Vagina (tissue), 2 donors: ENCODE measurements at regions of chr5 and their contacts with region 1.

Region 1: DNA sequence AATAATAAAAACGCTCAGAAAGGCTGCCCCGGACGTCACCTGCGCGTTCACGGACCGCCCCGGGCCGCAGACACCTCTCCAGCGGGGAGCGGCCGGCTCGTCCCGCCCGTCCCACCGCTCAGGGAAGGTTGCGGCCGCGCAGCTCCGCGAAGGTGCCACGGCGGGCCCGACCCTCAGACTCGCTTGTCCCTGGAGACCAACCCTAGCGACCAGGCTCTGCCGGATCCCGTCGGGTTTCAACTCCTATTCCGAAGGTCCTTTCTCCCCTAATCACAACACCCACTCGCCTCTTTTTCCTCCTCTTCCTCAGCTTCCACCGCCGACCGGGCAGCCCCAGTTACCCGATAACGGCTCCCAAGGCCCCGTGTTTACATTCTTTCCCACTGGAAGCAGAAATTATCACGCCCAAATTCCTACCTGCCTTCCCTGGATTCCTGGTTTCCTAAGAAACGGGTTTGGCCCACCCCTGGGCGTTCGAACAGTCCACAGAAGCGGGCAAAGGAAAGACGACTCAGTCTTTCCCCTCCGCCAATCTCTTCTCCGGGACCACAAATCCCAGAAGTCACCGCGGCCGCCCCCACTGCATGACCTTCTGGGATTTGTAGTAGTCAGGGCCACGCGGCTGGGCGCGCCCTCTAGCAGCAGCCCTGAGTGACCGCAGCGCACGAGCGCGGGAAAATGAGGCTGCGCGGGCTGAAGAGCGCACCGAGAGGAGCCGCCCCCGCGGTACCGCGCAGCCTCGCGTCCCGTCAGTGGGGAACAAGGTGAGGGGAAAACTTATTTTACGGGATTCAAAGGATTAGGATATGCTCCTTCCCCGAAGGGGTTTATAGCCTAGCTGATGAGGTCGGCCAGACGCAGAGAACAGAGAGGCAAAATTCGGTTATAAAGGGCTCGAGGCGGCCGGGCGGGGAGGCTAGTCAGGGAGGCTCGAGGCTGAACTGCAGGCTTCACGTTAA is at the start of gene TTC33:
- DNase-seq: peak in 1 of 2 donors; percentile 94
- H3K4me3 ChIP-seq: peak within 1 kb of the TSS; percentile 93 to 95
- H3K27ac ChIP-seq: peak within 1 kb of the TSS; percentile 92
- H3K4me1 ChIP-seq: peaks cover 22% of the 10 kb centered on the region
- H3K27me3 ChIP-seq: no peaks in the 10 kb centered on the region
- CTCF ChIP-seq: peak; percentile 57 to 76 (median 72)
- POLR2A ChIP-seq: peak in 1 of 2 donors; percentile 69
- total RNA-seq, gene TTC33: 12.8 TPM

Region 2: GRCh38 chr5:40356248-40356647 is 399.4 kb before region 1 on chr5:
- intact Hi-C with region 1: no loop called
- DNase-seq: no peak
- H3K4me3 ChIP-seq: no peak overlapping the region
- H3K27ac ChIP-seq: no peak overlapping the region
- H3K4me1 ChIP-seq: no peaks in the 10 kb centered on the region
- H3K27me3 ChIP-seq: no peaks in the 10 kb centered on the region
- CTCF ChIP-seq: no peak
- POLR2A ChIP-seq: no peak

Region 3: DNA sequence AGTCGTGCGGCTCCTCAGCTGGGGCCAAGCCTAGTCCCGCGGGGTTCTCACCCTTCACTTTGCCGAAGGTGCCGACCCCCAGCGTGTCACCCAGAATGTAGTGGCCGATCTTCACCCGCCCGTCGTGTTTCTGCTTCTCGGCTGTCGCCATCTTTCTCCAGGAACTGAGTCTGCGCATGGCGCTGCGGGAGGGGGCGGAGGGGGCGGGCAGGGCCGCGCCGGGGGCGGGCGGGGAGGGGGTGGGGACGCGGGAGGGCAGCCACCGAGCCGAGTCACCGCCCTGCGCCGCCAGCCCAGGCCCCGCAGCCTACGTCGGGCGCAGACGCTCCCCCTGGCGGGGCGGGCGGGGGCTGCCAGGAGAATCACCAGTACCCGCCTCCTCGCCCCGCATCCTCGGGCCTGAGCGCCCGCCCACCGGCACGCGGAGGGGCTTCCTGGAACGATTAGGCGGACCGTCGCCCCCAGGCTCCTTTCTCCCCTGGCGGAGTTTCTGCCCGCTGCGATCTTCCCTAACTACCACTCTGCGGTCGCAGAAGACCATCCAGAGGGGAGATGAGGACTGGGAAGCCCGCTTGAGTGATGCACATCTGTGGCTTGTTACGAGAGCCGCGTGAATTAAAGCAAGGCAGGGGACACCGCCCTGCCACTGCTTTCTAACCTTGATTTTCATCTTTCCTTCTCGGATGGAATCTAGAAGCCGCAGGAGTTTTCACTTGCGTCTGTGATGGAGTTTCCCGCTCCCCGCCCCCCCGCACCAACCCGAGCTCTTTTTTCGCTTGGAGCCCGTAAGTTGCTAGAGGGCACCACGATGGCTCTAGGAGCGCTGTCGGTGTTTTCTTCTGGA is 42.5 kb after region 1 on chr5 and contains the start of gene PRKAA1:
- intact Hi-C with region 1: loop called (anchors 2 kb)
- DNase-seq: peak in 1 of 2 donors; percentile 93
- H3K4me3 ChIP-seq: peak within 1 kb of the TSS; percentile 88 to 99
- H3K27ac ChIP-seq: peak within 1 kb of the TSS; percentile 98
- H3K4me1 ChIP-seq: peaks cover 48% of the 10 kb centered on the region
- H3K27me3 ChIP-seq: no peaks in the 10 kb centered on the region
- CTCF ChIP-seq: peak in 2 of 3 experiments; percentile 29 to 46
- POLR2A ChIP-seq: peak in 1 of 2 donors; percentile 82
- total RNA-seq, gene PRKAA1: 69.0 TPM